PC-9 (cell line): ENCODE measurements at regions of chr15 and their contacts with region 1.

Region 1: GRCh38 chr15:44195151-44195740 is at the start of gene FRMD5:
- DNase-seq: peak; percentile 89 to 97
- H3K4me3 ChIP-seq: peak within 1 kb of the TSS; percentile 77
- H3K27ac ChIP-seq: peak within 1 kb of the TSS; percentile 14; the same call in 1 of the 2 replicates
- H3K4me1 ChIP-seq: peaks cover 28% of the 10 kb centered on the region; the same call in 1 of the 2 replicates
- H3K27me3 ChIP-seq: no peaks in the 10 kb centered on the region
- CTCF ChIP-seq: peak; percentile 35; the same call in 1 of the 2 replicates
- total RNA-seq, gene FRMD5: 5.5 and 6.5 TPM in 2 replicates

Region 2: DNA sequence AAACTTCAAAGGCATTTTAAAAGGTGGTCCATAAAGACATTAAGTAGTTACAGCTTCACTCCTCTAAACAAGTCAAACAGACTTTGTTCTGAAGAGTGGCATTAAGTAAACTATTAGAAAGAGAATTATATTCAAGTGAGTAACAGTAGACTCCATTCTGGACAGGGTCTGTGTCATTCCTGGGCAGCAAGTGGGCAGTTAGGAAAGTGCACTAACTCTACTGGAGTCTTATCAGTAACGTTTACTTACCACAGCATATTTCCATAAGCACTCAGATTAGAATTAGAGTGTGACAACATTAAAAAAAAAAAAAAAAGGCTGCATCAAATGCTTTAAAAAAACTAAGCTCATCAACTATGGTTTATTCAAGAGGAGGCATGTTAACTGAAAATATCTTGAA is 1100.0 kb before region 1 on chr15:
- CTCF ChIA-PET with region 1: interaction called, 11 read pairs
- POLR2A ChIA-PET with region 1: no interaction called
- intact Hi-C with region 1: no loop called
- DNase-seq: no peak
- H3K4me3 ChIP-seq: no peak overlapping the region
- H3K27ac ChIP-seq: no peak overlapping the region
- H3K4me1 ChIP-seq: no peaks in the 10 kb centered on the region
- H3K27me3 ChIP-seq: no peaks in the 10 kb centered on the region
- CTCF ChIP-seq: no peak

Region 3: GRCh38 chr15:44066316-44066740 is 128.9 kb before region 1 on chr15:
- CTCF ChIA-PET with region 1: no interaction called
- POLR2A ChIA-PET with region 1: no interaction called
- intact Hi-C with region 1: loop called (anchors 10 kb)
- DNase-seq: peak; percentile 51 to 52
- H3K4me3 ChIP-seq: no peak overlapping the region
- H3K27ac ChIP-seq: no peak overlapping the region
- H3K4me1 ChIP-seq: no peaks in the 10 kb centered on the region
- H3K27me3 ChIP-seq: no peaks in the 10 kb centered on the region
- CTCF ChIP-seq: peak; percentile 90

Region 4: GRCh38 chr15:44102675-44103254 is 92.5 kb before region 1 on chr15:
- CTCF ChIA-PET with region 1: no interaction called
- POLR2A ChIA-PET with region 1: no interaction called
- intact Hi-C with region 1: loop called (anchors 10 kb)
- DNase-seq: peak; percentile 43 to 89
- H3K4me3 ChIP-seq: no peak overlapping the region
- H3K27ac ChIP-seq: peak overlapping the region; percentile 78
- H3K4me1 ChIP-seq: peaks cover 32% of the 10 kb centered on the region
- H3K27me3 ChIP-seq: no peaks in the 10 kb centered on the region
- CTCF ChIP-seq: no peak

Region 5: DNA sequence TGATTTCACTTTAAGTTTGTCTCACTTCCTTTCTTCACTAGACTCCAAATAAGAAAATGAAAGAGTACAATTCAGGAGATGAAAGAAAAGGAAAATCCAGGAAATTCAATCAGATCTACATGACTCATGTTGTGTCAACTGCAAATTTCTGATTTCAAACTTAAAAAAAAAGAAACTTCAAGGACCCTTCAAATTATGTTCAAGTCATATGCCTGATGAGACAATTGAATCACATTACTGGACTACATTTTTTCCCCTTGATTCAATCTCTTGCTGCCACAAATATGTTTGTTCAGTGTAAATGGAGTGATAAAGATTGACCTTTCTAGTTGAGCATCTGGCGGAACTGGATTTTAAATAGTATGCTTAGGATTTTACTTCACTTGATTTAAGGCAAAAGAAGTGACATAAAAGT is 37.6 kb before region 1 on chr15:
- CTCF ChIA-PET with region 1: no interaction called
- POLR2A ChIA-PET with region 1: no interaction called
- intact Hi-C with region 1: loop called (anchors 2 kb)
- DNase-seq: peak; percentile 4 to 95
- H3K4me3 ChIP-seq: peak overlapping the region; percentile 27; the same call in 1 of the 2 replicates
- H3K27ac ChIP-seq: peak overlapping the region; percentile 82
- H3K4me1 ChIP-seq: peaks cover 39% of the 10 kb centered on the region
- H3K27me3 ChIP-seq: no peaks in the 10 kb centered on the region
- CTCF ChIP-seq: no peak

Region 6: GRCh38 chr15:44215594-44215993 is 20.3 kb after region 1 on chr15:
- CTCF ChIA-PET with region 1: no interaction called
- POLR2A ChIA-PET with region 1: no interaction called
- intact Hi-C with region 1: loop called (anchors 2 kb)
- DNase-seq: peak; percentile 26 to 71
- H3K4me3 ChIP-seq: no peak overlapping the region
- H3K27ac ChIP-seq: no peak overlapping the region
- H3K4me1 ChIP-seq: 0 out of 2 replicates have a peak, but pooled peaks cover 4% of the 10 kb centered on the region
- H3K27me3 ChIP-seq: no peaks in the 10 kb centered on the region
- CTCF ChIP-seq: no peak

Region 7: GRCh38 chr15:44243829-44244228 is 48.6 kb after region 1 on chr15:
- CTCF ChIA-PET with region 1: no interaction called
- POLR2A ChIA-PET with region 1: no interaction called
- intact Hi-C with region 1: no loop called
- DNase-seq: no peak
- H3K4me3 ChIP-seq: no peak overlapping the region
- H3K27ac ChIP-seq: no peak overlapping the region
- H3K4me1 ChIP-seq: no peaks in the 10 kb centered on the region
- H3K27me3 ChIP-seq: no peaks in the 10 kb centered on the region
- CTCF ChIP-seq: 0 out of 2 replicates have a peak, but pooled peaks have one; percentile 24

Region 8: GRCh38 chr15:44545913-44546802 is 350.9 kb after region 1 on chr15:
- CTCF ChIA-PET with region 1: no interaction called
- POLR2A ChIA-PET with region 1: interaction called, 19 read pairs
- intact Hi-C with region 1: no loop called
- DNase-seq: no peak
- H3K4me3 ChIP-seq: no peak overlapping the region
- H3K27ac ChIP-seq: peak overlapping the region; percentile 16; the same call in 1 of the 2 replicates
- H3K4me1 ChIP-seq: peaks cover 23% of the 10 kb centered on the region; the same call in 1 of the 2 replicates
- H3K27me3 ChIP-seq: no peaks in the 10 kb centered on the region
- CTCF ChIP-seq: no peak; the same call in 1 of the 2 replicates